PC-9 (cell line): ENCODE measurements at regions of chr11 and their contacts with region 1.

Region 1: GRCh38 chr11:123218451-123218850 is 23.4 kb upstream of the CLMP start:
- DNase-seq: no peak
- H3K4me3 ChIP-seq: no peak overlapping the region
- H3K27ac ChIP-seq: peak overlapping the region; percentile 76
- H3K4me1 ChIP-seq: peaks cover 23% of the 10 kb centered on the region
- H3K27me3 ChIP-seq: no peaks in the 10 kb centered on the region
- CTCF ChIP-seq: no peak

Region 2: DNA sequence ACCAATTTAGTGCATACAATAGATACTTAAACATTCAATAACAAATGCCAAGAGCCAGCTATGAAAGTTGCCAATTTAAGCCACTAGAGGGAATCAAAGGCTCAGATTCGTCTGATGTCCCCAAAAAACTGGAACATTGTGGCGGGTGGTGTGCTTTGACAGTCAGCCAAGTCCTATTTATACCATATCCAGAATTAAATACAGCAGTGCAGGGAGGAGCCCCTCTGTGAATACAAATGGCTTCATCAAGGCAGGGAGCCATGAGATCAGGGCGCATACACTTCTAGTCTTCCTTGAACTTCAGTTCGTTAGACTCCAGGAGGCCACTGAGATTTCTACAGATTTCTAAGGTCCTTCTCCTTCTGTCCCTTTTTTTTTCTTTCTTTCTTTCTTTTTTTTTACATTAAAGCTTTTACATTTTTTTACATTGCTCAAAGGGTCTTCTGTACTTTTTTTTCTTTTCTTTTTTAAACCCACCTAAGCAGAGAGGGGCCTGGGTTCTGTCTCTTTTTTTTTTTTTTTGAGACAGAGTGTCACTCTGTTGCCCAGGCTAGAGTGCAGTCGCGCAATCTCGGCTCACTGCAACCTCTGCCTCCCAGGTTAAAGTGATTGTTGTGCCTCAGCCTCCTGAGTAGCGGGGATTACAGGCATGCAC is 115.0 kb before region 1 on chr11:
- CTCF ChIA-PET with region 1: no interaction called
- POLR2A ChIA-PET with region 1: no interaction called
- intact Hi-C with region 1: no loop called
- DNase-seq: peak; percentile 33 to 60
- H3K4me3 ChIP-seq: no peak overlapping the region
- H3K27ac ChIP-seq: no peak overlapping the region
- H3K4me1 ChIP-seq: no peaks in the 10 kb centered on the region
- H3K27me3 ChIP-seq: no peaks in the 10 kb centered on the region
- CTCF ChIP-seq: peak; percentile 82

Region 3: GRCh38 chr11:123122341-123122740 is 96.1 kb before region 1 on chr11:
- CTCF ChIA-PET with region 1: no interaction called
- POLR2A ChIA-PET with region 1: no interaction called
- intact Hi-C with region 1: loop called (anchors 1 kb)
- DNase-seq: peak in 1 of 2 experiments; percentile 82
- H3K4me3 ChIP-seq: no peak overlapping the region; the same call in 1 of the 2 replicates
- H3K27ac ChIP-seq: peak overlapping the region; percentile 92
- H3K4me1 ChIP-seq: peaks cover 48% of the 10 kb centered on the region
- H3K27me3 ChIP-seq: no peaks in the 10 kb centered on the region
- CTCF ChIP-seq: no peak

Region 4: GRCh38 chr11:123195188-123196059 is 23.0 kb before region 1 on chr11 and contains the start of gene CLMP:
- CTCF ChIA-PET with region 1: no interaction called
- POLR2A ChIA-PET with region 1: no interaction called
- intact Hi-C with region 1: no loop called
- DNase-seq: no peak
- H3K4me3 ChIP-seq: peak within 1 kb of the TSS; percentile 61
- H3K27ac ChIP-seq: peak within 1 kb of the TSS; percentile 50
- H3K4me1 ChIP-seq: peaks cover 45% of the 10 kb centered on the region
- H3K27me3 ChIP-seq: no peaks in the 10 kb centered on the region
- CTCF ChIP-seq: no peak
- total RNA-seq, gene CLMP: 5.4 and 6.1 TPM in 2 replicates

Region 5: DNA sequence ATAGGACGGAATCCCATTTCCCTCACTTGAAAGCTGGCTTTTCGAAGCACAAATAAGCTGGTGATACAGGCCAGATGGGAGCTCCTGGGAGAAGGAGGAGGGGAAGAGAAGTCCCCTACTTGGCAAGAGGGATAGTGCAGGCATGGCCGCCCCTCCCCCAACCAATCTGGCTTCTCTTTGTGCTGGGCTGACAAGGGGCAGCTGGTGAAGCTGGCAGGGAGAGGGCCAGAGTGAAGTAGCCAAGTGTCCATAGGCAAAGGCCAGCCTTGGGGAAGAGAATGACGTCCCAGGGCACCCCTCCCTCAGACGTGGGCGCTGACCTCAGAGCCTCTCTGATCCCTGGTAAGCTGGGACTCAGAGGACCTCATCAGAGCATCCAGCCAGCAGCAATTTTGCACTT is 132.9 kb after region 1 on chr11:
- CTCF ChIA-PET with region 1: no interaction called
- POLR2A ChIA-PET with region 1: no interaction called
- intact Hi-C with region 1: no loop called
- DNase-seq: no peak
- H3K4me3 ChIP-seq: no peak overlapping the region
- H3K27ac ChIP-seq: no peak overlapping the region
- H3K4me1 ChIP-seq: no peaks in the 10 kb centered on the region
- H3K27me3 ChIP-seq: no peaks in the 10 kb centered on the region; the same call in 1 of the 2 replicates
- CTCF ChIP-seq: no peak

Region 6: GRCh38 chr11:123549926-123550917 is 331.8 kb after region 1 on chr11:
- CTCF ChIA-PET with region 1: no interaction called
- POLR2A ChIA-PET with region 1: interaction called, 10 read pairs
- intact Hi-C with region 1: no loop called
- DNase-seq: no peak
- H3K4me3 ChIP-seq: no peak overlapping the region
- H3K27ac ChIP-seq: no peak overlapping the region
- H3K4me1 ChIP-seq: peaks cover 9% of the 10 kb centered on the region
- H3K27me3 ChIP-seq: no peaks in the 10 kb centered on the region
- CTCF ChIP-seq: no peak